Activated naive CD4-positive, alpha-beta T cell treated with anti-CD3 and anti-CD28 coated beads for 36 hours (primary cell): ENCODE measurements at regions of chr4 and their contacts with region 1.

Region 1: GRCh38 chr4:89024051-89024675 is 32.8 kb downstream of the FAM13A start:
- DNase-seq: peak; percentile 71
- H3K4me3 Mint-ChIP-seq: no peak overlapping the region
- H3K27ac Mint-ChIP-seq: no peak overlapping the region
- H3K4me1 Mint-ChIP-seq: peaks cover 4% of the 10 kb centered on the region
- H3K27me3 Mint-ChIP-seq: no peaks in the 10 kb centered on the region

Region 2: GRCh38 chr4:88672987-88673386 is 351.2 kb before region 1 on chr4:
- CTCF ChIA-PET with region 1: interaction called, 6 read pairs
- intact Hi-C with region 1: loop called (anchors 1 kb)
- DNase-seq: peak; percentile 62
- H3K4me3 Mint-ChIP-seq: no peak overlapping the region
- H3K27ac Mint-ChIP-seq: no peak overlapping the region
- H3K4me1 Mint-ChIP-seq: peaks cover 6% of the 10 kb centered on the region
- H3K27me3 Mint-ChIP-seq: no peaks in the 10 kb centered on the region

Region 3: DNA sequence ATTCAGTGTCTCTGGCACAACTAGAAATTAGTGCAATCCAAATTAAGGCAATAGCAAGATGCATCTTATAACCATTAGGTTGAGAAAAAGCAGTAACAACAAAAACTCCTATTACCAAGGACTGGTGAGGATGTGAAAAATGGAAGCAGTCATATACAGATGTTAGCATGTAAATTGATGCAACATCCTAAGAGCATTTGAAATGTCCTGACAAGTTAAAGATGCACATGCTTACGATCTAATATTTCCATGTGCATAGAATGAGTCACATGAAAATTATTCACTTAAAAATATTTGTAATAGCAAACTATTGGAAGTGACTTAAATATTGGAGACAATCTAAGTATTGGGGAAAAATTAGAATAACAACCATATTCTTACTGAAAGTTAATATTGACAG is 130.2 kb before region 1 on chr4:
- CTCF ChIA-PET with region 1: no interaction called
- intact Hi-C with region 1: loop called (anchors 5 kb)
- DNase-seq: no peak
- H3K4me3 Mint-ChIP-seq: no peak overlapping the region
- H3K27ac Mint-ChIP-seq: no peak overlapping the region
- H3K4me1 Mint-ChIP-seq: no peaks in the 10 kb centered on the region
- H3K27me3 Mint-ChIP-seq: no peaks in the 10 kb centered on the region

Region 4: DNA sequence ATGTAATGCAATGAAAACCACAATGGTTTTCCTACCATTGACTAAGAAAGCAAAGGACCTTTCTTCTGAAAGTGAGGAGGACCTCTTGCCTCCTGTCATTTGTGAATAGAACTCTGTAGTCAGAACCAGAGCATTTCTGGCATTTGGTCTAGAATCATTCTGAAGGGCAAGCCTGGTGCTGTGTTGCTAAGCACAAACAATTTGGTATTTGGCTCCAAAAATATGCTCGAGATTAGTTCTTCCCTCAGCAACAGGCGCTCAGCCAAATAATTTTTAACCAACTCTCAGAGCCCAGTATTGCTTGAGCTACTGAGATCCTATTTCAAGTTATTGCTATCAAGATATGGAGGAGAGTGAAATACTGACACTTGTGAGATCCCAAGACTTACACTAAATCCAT is 741.8 kb after region 1 on chr4:
- CTCF ChIA-PET with region 1: no interaction called
- intact Hi-C with region 1: no loop called
- DNase-seq: no peak
- H3K4me3 Mint-ChIP-seq: no peak overlapping the region
- H3K27ac Mint-ChIP-seq: no peak overlapping the region
- H3K4me1 Mint-ChIP-seq: no peaks in the 10 kb centered on the region
- H3K27me3 Mint-ChIP-seq: peaks cover 4% of the 10 kb centered on the region